ENCODE measurements at regions of chr1 and their contacts with region 1.

Region 1: DNA sequence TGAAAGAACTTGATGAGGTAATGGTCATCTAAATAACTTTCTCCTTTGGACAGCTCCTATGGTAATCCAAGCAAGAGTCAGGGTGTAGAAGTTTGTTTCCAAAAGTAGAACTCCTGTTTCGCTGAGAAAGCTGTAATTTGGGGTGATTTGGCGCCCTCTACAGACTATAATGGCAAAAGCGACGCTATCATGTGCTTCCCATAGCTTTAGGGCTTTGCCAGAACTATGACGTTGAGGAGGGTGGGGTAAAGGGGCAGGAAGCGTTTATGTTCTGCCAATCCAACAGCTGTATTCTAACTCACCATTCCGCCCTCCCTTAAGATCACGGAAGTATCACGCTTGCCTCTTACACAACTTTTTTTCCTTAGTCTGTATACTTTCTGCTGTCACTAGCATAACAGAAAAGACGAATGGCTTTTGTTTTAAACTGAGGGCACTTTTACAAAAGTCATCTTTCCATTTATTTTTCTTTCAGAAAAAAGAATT is at the start of gene FMO4:
- DNase-seq: peak; percentile 96
- H3K4me3 ChIP-seq: peak within 1 kb of the TSS; percentile 21
- H3K27ac ChIP-seq: peak within 1 kb of the TSS; percentile 30
- H3K4me1 ChIP-seq: no peaks in the 10 kb centered on the region
- H3K27me3 ChIP-seq: no peaks in the 10 kb centered on the region
- CTCF ChIP-seq: peak; percentile 80
- total RNA-seq, gene FMO4: 2.2 to 5.7 TPM

Region 2: DNA sequence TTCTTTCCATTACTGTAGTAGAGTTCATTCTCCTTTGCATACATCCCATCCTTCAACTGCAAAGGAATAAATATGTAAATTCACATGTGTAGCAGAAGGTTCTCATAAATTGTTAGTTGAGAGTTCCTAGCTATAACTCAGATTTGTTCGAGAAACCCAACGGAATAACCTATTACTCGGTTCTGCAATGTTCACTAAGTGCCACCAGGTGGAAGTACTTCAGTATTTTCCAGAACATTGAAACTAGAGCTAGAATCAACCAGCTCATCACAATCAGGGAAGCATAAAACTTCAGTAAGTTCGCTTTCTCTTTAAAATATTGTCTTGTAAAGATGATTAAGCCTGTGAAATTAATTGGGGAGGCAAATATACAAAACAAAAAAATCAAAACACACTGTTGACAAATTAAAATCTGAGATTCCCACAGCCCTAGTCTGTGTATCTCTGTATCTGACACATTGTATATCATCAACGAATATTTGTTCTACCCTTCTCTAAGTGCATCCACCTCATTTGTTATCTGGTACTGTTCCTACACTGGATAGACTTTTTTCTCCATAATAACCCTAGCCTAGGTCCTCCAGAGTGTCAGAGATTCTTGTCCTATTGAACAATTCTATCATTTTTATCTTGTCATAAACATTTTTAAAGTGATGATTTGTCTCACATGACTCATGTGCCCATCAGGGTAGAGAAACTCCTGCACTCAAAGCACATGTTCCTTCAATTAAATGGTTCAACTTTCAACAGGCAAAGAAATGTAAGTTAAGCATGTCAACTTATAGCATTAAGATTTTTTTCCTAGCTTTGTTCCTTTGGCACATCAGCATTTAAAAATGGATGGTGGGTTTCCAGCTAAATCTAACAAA is 346.6 kb before region 1 on chr1:
- intact Hi-C with region 1: loop called (anchors 10 kb)
- DNase-seq: no peak
- H3K4me3 ChIP-seq: no peak overlapping the region
- H3K27ac ChIP-seq: no peak overlapping the region
- H3K4me1 ChIP-seq: no peaks in the 10 kb centered on the region
- H3K27me3 ChIP-seq: no peaks in the 10 kb centered on the region
- CTCF ChIP-seq: peak; percentile 50

Region 3: GRCh38 chr1:171081314-171081753 is 232.5 kb before region 1 on chr1:
- intact Hi-C with region 1: loop called (anchors 10 kb)
- DNase-seq: no peak
- H3K4me3 ChIP-seq: no peak overlapping the region
- H3K27ac ChIP-seq: no peak overlapping the region
- H3K4me1 ChIP-seq: no peaks in the 10 kb centered on the region
- H3K27me3 ChIP-seq: no peaks in the 10 kb centered on the region
- CTCF ChIP-seq: peak; percentile 23

Region 4: GRCh38 chr1:171245458-171246064 is 68.3 kb before region 1 on chr1:
- intact Hi-C with region 1: loop called (anchors 5 kb)
- DNase-seq: peak; percentile 40
- H3K4me3 ChIP-seq: no peak overlapping the region
- H3K27ac ChIP-seq: no peak overlapping the region
- H3K4me1 ChIP-seq: no peaks in the 10 kb centered on the region
- H3K27me3 ChIP-seq: no peaks in the 10 kb centered on the region
- CTCF ChIP-seq: peak; percentile 69

Measured in colonic mucosa (tissue), 4 donors.